Endothelial cell of umbilical vein (primary cell): ENCODE measurements at regions of chr3 and their contacts with region 1.

Region 1: GRCh38 chr3:142175478-142175877 is 26.1 kb upstream of the TFDP2 start:
- DNase-seq: no peak
- H3K4me3 ChIP-seq: no peak overlapping the region
- H3K27ac ChIP-seq: no peak overlapping the region
- H3K4me1 ChIP-seq: no peaks in the 10 kb centered on the region
- H3K27me3 ChIP-seq: no peaks in the 10 kb centered on the region
- CTCF ChIP-seq: no peak
- POLR2A ChIP-seq: no peak

Region 2: DNA sequence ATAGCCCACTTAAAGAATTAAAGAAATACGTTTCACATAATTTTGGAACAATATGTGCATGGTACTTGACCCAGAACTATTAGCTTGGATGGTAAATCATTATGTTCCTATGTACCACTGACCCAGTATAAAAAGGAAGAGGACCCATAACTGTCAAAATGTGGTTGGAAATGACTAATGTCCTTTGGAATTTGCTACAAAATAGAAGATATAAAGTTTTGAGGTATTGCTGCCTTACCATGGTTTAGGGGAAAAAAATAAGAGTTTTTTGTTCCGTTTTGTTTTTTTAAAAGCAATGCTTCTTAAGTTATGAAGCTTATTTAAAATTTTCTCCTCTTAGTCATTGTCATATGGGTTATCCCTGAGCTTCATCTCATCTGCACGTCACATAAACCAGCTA is 10.3 kb before region 1 on chr3:
- CTCF ChIA-PET with region 1: interaction called, 40 read pairs
- POLR2A ChIA-PET with region 1: no interaction called
- dilution Hi-C with region 1: no loop called
- intact Hi-C with region 1: no loop called
- DNase-seq: no peak
- H3K4me3 ChIP-seq: no peak overlapping the region
- H3K27ac ChIP-seq: no peak overlapping the region
- H3K4me1 ChIP-seq: peaks cover 5% of the 10 kb centered on the region
- H3K27me3 ChIP-seq: no peaks in the 10 kb centered on the region
- CTCF ChIP-seq: no peak
- POLR2A ChIP-seq: no peak

Region 3: GRCh38 chr3:142237891-142238290 is 62.4 kb after region 1 on chr3:
- CTCF ChIA-PET with region 1: no interaction called
- POLR2A ChIA-PET with region 1: no interaction called
- dilution Hi-C with region 1: no loop called
- intact Hi-C with region 1: no loop called
- DNase-seq: no peak
- H3K4me3 ChIP-seq: no peak overlapping the region
- H3K27ac ChIP-seq: no peak overlapping the region
- H3K4me1 ChIP-seq: no peaks in the 10 kb centered on the region
- H3K27me3 ChIP-seq: peaks cover 2 to 3% of the 10 kb centered on the region in 2 experiments
- CTCF ChIP-seq: no peak
- POLR2A ChIP-seq: no peak